Left ventricle myocardium inferior (tissue), 1 donor: ENCODE measurements at regions of chr2 and their contacts with region 1.

Region 1: DNA sequence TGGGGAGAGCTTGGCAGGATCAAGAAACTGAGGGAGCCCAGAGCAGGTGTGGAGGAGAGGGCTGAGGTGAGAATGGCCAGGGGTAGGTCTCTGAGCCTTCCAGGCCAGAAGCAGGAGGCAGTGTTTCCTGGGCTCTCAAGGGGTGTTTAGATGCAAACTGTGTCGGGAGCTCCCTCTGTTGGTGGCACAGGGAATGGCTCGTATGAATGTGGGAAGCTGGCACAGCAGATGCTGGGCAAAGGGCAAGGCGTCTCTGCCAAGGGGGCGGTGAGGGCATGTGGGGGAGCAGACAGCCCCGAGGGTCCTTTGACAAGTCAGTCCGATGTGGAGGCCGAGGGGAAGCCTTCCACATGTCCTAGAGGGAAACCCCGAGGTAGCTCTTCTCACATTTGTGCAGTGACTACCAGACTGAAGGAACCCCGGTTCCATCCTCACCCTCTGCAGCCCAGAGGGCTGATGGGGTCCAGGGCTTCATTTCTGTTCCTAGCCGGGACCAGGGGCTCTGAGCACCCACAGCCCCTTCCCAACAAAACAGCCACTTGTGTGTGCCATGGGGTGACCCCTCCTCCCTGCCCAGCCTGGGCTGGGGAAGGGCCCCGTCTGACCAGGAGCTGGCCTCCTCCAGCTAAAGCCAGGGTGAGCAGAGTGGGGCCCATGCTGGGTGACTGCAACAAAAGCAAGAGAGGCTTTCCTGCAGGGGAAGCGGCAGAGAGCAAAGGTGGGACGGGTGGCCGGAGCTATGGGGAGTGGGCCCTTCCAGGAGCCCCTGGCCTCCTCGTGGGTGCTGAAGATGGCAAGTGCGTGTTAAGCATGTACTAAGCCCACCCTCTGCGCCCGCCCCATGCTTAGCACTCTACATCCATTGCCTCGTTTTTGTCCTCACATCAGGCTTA is 103.4 kb downstream of the SEPTIN10 start:
- DNase-seq: peak; percentile 80
- H3K4me3 ChIP-seq: no peak overlapping the region
- H3K27ac ChIP-seq: no peak overlapping the region
- H3K4me1 ChIP-seq: peaks cover 3% of the 10 kb centered on the region
- H3K27me3 ChIP-seq: no peaks in the 10 kb centered on the region
- CTCF ChIP-seq: peak; percentile 96

Region 2: DNA sequence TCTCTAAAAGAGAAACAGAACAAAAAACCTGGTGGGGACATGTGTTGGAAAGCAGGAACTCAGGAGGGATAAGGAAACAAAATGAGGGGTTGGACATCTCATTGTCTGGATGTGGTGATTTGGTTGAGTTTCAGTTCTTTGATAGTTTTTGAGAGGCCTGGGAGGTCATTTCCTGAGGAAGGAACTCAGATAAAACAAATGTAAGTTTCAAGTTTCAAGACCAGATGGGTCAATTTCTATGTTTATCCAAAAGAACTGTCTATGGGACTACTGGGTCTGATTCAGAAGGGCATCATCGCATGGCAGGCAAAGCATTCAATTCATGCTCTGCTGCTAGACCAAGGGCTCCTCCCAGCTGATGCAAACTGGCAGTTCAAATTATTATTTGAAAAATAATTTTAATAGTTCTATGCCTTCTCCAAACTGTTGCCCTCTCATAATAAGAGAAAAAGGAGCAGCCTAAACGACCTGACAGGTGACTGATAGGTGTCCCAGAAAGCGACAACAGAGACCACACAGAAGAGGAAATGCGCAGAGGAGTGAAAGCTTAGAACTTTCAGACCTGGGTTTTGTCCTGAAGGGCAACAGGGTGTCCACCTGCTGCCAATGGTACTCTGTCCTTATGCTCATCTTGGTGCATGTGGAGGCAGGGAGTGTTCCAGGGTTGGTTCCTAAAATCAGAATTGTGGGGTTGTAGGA is 420.6 kb before region 1 on chr2:
- intact Hi-C with region 1: no loop called
- DNase-seq: no peak
- H3K4me3 ChIP-seq: no peak overlapping the region
- H3K27ac ChIP-seq: no peak overlapping the region
- H3K4me1 ChIP-seq: no peaks in the 10 kb centered on the region
- H3K27me3 ChIP-seq: peaks cover 7% of the 10 kb centered on the region
- CTCF ChIP-seq: no peak

Region 3: GRCh38 chr2:109128048-109128465 is 382.3 kb before region 1 on chr2:
- intact Hi-C with region 1: loop called (anchors 5 kb)
- DNase-seq: peak; percentile 81
- H3K4me3 ChIP-seq: peak overlapping the region; percentile 85
- H3K27ac ChIP-seq: peak overlapping the region; percentile 87
- H3K4me1 ChIP-seq: peaks cover 44% of the 10 kb centered on the region
- H3K27me3 ChIP-seq: peaks cover 4% of the 10 kb centered on the region
- CTCF ChIP-seq: peak; percentile 95

Region 4: DNA sequence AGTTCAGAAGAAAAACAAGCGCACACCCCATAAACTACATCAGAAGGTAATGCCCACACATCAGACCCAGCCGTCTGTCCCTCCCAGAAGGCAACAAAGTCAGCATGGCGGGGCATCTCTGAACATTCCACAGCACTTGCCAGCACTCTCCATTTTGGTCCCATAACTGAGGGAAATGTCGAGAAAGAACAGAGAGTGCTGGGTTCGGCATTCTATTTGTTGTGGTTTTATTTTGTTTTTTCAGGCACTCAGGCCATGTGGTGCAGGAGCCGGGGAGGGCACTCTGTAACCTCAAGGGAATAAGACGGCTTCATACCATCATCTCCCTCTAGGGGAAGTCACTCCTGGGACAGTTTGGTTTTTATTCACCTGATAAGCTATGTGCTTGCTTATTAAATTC is 52.6 kb before region 1 on chr2:
- intact Hi-C with region 1: no loop called
- DNase-seq: no peak
- H3K4me3 ChIP-seq: no peak overlapping the region
- H3K27ac ChIP-seq: no peak overlapping the region
- H3K4me1 ChIP-seq: peaks cover 10% of the 10 kb centered on the region
- H3K27me3 ChIP-seq: no peaks in the 10 kb centered on the region
- CTCF ChIP-seq: no peak

Region 5: DNA sequence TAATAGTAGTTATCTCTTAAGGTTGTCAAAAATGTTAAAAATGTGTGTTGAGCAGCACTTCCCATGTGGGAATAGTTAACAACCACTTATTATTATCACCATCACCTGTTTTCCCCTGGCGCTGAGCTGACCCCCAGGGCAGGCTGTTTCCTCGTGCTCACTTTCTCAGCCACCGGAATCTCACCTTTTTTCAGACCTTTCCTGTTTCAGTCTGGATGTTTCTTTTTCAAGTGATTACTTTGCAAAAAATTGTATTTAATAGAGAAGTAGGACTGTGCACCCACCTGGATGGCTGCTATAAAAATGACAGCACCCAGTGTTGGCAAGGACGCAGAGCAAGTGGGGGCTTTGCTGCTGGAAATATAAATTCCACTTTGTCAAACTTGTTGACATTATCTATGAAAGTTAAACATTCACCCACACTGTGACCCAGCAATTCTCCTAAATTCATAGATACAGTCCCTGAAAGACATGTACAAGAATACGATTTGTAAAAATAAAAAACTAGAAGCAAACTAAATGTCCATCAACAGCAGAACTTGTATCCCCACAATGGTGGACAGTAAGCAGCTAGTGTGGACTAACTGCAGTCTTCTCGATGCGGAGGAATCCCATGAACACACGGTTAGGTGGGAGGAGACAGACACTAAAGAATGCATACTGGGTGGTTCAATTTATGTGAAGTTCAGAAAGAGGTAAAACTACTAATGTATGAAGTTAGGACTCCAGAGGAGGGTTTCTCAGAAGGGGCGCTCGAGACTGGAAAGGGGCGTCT is 170.3 kb after region 1 on chr2:
- intact Hi-C with region 1: no loop called
- DNase-seq: no peak
- H3K4me3 ChIP-seq: no peak overlapping the region
- H3K27ac ChIP-seq: no peak overlapping the region
- H3K4me1 ChIP-seq: peaks cover 34% of the 10 kb centered on the region
- H3K27me3 ChIP-seq: no peaks in the 10 kb centered on the region
- CTCF ChIP-seq: no peak